Mammary epithelial cell (primary cell): ENCODE measurements at regions of chr14 and their contacts with region 1.

Region 1: DNA sequence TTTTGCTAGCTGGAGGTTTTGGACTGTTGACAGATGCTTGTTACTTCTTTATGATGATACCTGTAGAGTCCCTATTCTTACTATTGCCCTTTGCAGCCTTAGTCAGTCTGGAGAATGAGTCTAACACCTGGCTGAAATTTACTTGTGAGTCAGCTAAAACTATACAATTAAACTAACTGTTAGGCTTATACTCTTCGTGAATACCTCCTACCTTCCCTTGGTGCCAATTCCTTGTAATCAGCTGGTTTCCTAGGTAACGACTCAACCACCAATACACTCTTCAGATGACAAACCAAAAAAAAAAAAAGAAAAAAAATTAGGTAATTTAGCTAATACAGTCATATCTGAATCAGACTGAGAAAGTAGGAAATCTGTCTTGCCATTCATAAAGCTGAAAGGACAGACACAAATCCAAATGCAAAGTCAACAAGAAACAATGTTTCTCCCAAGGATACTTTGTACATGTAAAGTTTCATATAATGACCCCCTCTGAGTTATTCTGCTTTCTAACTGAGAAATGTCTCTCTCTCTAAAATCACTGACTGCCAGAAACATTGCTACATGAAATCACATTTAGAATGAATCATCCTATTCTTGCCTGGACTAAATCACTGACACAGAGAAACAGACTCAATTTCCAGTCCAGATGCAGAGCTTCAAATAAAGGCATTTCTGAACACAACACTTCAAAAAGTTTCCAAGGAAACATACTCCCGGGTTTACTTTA is 56.5 kb upstream of the CDKL1 start:
- DNase-seq: peak; percentile 98
- H3K4me3 ChIP-seq: no peak overlapping the region
- H3K27ac ChIP-seq: peak overlapping the region; percentile 95
- H3K4me1 ChIP-seq: peaks cover 16% of the 10 kb centered on the region
- H3K27me3 ChIP-seq: no peaks in the 10 kb centered on the region
- CTCF ChIP-seq: no peak

Region 2: DNA sequence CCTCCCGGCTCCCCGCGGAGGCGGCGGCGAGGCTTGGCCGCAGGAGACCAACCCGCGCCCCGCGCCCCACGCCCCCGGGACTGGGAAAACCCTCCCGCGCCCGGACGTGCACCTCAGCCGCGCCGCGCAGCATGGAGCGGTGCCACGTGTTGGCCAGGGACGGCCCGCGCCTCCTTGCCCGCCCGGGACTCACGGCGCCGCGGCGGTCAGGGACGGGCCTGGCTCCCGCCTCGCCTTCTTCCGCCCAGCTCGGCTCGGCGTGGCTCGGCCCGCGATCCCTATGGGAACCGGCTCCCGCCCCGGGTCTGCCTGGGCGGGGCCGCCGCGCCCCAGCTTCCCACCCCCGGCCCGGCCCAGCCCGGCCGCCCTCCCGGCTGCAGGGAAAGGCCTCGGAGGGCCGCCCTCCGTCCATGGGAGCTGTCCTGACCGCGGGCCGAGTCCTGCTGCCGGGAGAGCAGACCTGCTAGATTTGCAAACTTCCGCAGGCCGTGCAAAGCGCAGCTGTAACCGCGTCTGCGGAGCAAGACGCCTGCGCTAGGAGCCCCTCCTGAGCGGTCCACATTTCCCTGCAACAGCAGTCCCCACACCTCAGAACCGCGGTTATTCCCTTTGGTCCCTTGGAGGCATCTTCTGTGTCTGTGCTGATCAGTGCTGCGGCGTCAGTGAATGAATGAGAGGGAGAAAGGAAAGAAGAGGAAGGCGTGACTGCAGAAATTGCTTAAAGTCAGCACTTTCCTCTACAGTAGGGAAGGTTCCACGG is 56.3 kb before region 1 on chr14 and contains the start of gene CDKL1:
- CTCF ChIA-PET with region 1: interaction called, 9 read pairs
- dilution Hi-C with region 1: no loop called
- in situ Hi-C with region 1: no loop called
- intact Hi-C with region 1: loop called (anchors 2 kb)
- DNase-seq: peak; percentile 76
- H3K4me3 ChIP-seq: peak within 1 kb of the TSS; percentile 60 to 67 (median 67)
- H3K27ac ChIP-seq: peak within 1 kb of the TSS; percentile 96
- H3K4me1 ChIP-seq: peaks cover 12% of the 10 kb centered on the region
- H3K27me3 ChIP-seq: no peaks in the 10 kb centered on the region
- CTCF ChIP-seq: no peak
- total RNA-seq, gene CDKL1: 13.7 to 14.1 TPM

Region 3: GRCh38 chr14:50520947-50521815 is 68.0 kb after region 1 on chr14:
- CTCF ChIA-PET with region 1: no interaction called
- dilution Hi-C with region 1: no loop called
- in situ Hi-C with region 1: no loop called
- intact Hi-C with region 1: loop called (anchors 1 kb)
- DNase-seq: peak; percentile 93
- H3K4me3 ChIP-seq: no peak overlapping the region
- H3K27ac ChIP-seq: peak overlapping the region; percentile 91
- H3K4me1 ChIP-seq: peaks cover 23% of the 10 kb centered on the region
- H3K27me3 ChIP-seq: no peaks in the 10 kb centered on the region
- CTCF ChIP-seq: no peak

Region 4: GRCh38 chr14:50607181-50607580 is 154.0 kb after region 1 on chr14:
- CTCF ChIA-PET with region 1: no interaction called
- dilution Hi-C with region 1: no loop called
- in situ Hi-C with region 1: no loop called
- intact Hi-C with region 1: no loop called
- DNase-seq: peak; percentile 84
- H3K4me3 ChIP-seq: no peak overlapping the region
- H3K27ac ChIP-seq: no peak overlapping the region
- H3K4me1 ChIP-seq: peaks cover 8% of the 10 kb centered on the region
- H3K27me3 ChIP-seq: no peaks in the 10 kb centered on the region
- CTCF ChIP-seq: no peak

Region 5: GRCh38 chr14:51242545-51243490 is 789.7 kb after region 1 on chr14:
- CTCF ChIA-PET with region 1: interaction called, 30 read pairs
- dilution Hi-C with region 1: no loop called
- in situ Hi-C with region 1: no loop called
- intact Hi-C with region 1: no loop called
- DNase-seq: no peak
- H3K4me3 ChIP-seq: no peak overlapping the region
- H3K27ac ChIP-seq: no peak overlapping the region
- H3K4me1 ChIP-seq: peaks cover 3% of the 10 kb centered on the region
- H3K27me3 ChIP-seq: no peaks in the 10 kb centered on the region
- CTCF ChIP-seq: no peak